Left cardiac atrium (tissue), 4 donors: ENCODE measurements at regions of chr17 and their contacts with region 1.

Region 1: DNA sequence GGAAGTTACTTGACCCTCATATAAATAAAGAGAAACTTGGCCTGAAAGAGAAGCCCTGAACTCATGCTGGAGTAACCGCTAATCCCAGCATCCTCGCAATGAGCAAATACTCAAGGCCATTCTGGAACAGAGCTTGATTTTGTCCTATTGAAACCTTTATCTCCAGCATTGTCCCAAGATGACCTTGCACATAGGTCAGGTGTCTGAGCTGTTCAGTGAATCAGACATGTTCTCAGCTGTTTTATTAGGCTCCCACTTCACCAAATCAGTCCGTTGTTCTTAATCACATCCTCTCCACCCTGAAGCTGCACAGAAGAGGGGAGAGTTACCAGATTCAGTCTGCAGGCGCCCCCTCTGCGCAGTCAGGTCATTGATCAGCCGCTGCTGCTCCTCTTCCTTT is 9.1 kb upstream of the MYH1 start:
- DNase-seq: no peak
- ATAC-seq: no peak

Region 2: GRCh38 chr17:10394201-10394887 is 133.1 kb before region 1 on chr17:
- intact Hi-C with region 1: loop called in 1 of 2 experiments (anchors 10 kb)
- DNase-seq: no peak
- ATAC-seq: no peak

Region 3: DNA sequence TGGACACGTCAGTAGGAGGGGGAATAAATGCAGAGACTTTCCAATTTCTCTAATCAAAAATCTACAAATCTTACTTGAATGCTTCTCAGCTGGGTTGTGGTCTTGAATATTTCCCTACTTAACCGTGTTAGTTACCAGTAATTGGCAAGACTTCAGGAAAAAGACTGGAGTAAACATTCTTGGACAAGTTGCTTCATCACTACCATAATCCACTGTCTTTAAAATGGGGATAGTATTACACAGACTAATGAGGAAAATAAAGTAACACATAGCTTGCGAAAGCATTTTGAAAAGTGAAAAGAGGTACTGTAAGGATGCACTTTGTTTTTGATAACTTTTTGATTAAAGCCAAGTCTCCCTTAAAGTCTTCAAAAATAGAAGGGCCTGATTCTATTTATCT is 27.5 kb before region 1 on chr17:
- intact Hi-C with region 1: loop called in 1 of 2 experiments (anchors 2 kb)
- DNase-seq: no peak
- ATAC-seq: no peak

Region 4: DNA sequence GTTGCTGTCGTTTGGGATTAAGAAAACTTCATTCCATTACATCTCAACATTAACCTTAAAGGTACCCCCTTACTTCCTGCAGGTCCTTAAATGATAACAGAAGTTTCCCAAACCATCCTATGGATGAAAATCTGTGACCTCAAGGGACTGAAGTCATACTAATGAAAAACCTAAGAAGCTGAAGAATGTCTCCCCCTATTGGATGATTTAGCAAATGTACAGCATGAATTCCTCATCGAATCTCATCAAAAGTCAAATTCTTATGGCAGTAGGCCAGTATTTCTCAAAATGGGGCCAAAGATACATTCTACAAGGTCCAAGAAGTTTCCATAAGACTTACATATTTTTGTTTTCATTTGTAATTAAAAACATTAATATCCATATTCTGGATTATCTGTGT is 156.4 kb after region 1 on chr17:
- intact Hi-C with region 1: no loop called
- DNase-seq: no peak
- ATAC-seq: no peak